ENCODE measurements at regions of chr4 and their contacts with region 1.

Region 1: GRCh38 chr4:17810260-17811077 is at the starts of genes DCAF16 and NCAPG:
- DNase-seq: peak; percentile 98 to 99 (median 99)
- H3K4me3 ChIP-seq: peak within 1 kb of the TSS; percentile 74 to 97
- H3K4me3 Mint-ChIP-seq: peak within 1 kb of the TSS; percentile 96 to 100 (median 98)
- H3K27ac ChIP-seq: peak within 1 kb of the TSS; percentile 97
- H3K27ac Mint-ChIP-seq: peak within 1 kb of the TSS; percentile 97 to 100 (median 99)
- H3K4me1 ChIP-seq: peaks cover 66% of the 10 kb centered on the region
- H3K4me1 Mint-ChIP-seq: peaks cover 45 to 70% (median 56%) of the 10 kb centered on the region in 4 donors
- H3K27me3 ChIP-seq: no peaks in the 10 kb centered on the region
- H3K27me3 Mint-ChIP-seq: no peaks in the 10 kb centered on the region
- total RNA-seq, gene DCAF16: 74.7 to 74.9 TPM
- total RNA-seq, gene NCAPG: 0.20 to 0.83 TPM

Region 2: DNA sequence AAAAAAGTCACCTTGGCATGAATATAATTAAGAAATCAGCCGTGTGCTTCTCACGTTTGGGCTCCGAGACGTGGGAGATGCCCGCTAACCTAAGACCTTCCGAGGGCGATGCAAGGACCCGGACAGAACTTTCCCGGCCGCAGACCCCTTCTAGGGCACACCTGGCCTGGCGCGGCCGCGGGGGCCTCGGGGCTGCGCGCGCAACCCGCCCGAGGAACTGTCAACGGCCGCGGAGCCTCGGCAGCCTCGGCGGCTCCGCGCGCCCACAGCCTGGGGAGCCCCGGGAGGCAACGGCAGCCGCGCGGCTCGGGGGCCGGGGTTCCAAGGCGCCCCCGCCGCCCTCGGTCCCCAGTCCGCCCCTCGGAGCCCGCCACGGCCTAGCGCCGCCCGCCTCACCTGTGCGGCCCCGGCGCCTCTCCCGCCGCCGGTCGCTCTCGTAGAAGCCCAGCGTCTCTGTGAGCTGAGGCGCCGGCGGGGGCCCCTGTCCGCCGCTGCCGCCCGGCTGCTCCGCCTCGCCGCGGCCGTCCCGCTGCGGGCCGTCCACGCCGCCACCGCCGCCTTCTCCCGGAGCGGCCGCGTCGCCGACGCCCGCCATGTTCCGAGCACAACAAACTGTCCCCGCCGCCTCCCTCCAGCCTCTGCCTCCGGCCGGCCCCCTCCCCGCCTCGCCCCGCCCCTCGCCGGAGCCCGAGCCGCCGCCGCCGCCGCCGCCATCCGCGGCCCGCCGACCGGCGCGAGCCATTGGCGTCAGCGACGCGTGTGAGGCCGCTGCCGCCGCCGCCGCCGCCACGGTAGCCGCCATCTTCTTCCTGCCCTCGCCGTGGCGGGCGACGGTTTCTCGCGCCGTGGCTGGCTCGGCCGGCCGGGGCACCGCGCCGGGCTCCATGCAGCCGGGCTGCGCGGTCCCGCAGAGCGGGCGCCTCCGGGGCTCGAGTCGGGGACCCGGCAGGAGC is 1584.3 kb before region 1 on chr4 and contains the start of gene TAPT1:
- CTCF ChIA-PET with region 1: no interaction called
- POLR2A ChIA-PET with region 1: no interaction called
- intact Hi-C with region 1: loop called (anchors 5 kb)
- DNase-seq: peak; percentile 70 to 80 (median 72)
- H3K4me3 ChIP-seq: peak within 1 kb of the TSS; percentile 67 to 97
- H3K4me3 Mint-ChIP-seq: peak within 1 kb of the TSS; percentile 92 to 97 (median 93)
- H3K27ac ChIP-seq: peak within 1 kb of the TSS; percentile 69
- H3K27ac Mint-ChIP-seq: peak within 1 kb of the TSS; percentile 96 to 97 (median 96)
- H3K4me1 ChIP-seq: peaks cover 50% of the 10 kb centered on the region
- H3K4me1 Mint-ChIP-seq: peaks cover 36 to 72% (median 47%) of the 10 kb centered on the region in 4 donors
- H3K27me3 ChIP-seq: no peaks in the 10 kb centered on the region
- H3K27me3 Mint-ChIP-seq: no peaks in the 10 kb centered on the region
- total RNA-seq, gene TAPT1: 55.1 to 57.5 TPM

Region 3: DNA sequence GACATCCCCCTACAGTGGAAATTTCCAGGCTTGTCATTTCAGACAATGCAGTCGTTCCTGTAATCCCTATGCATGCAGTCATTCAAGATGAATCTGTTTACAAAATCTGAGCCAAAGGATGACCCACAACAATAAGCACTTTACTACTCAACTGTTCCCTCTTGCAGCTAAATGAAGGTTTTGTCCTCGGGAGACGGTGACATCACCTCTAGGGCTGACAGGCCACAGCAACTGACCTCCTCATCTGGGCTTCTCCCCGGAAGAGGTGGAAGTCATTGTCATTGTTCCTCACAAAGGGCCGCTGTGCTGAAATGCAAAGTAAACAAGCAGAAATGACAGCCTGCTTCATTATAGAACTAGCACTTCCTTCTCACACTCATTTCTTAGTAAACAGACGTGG is 266.3 kb before region 1 on chr4:
- CTCF ChIA-PET with region 1: interaction called, 57 read pairs
- POLR2A ChIA-PET with region 1: no interaction called
- intact Hi-C with region 1: loop called (anchors 1 kb)
- DNase-seq: no peak
- H3K4me3 ChIP-seq: no peak overlapping the region
- H3K4me3 Mint-ChIP-seq: no peak overlapping the region
- H3K27ac ChIP-seq: no peak overlapping the region
- H3K27ac Mint-ChIP-seq: no peak overlapping the region
- H3K4me1 ChIP-seq: no peaks in the 10 kb centered on the region
- H3K4me1 Mint-ChIP-seq: peaks cover 0 to 5% (median 1%) of the 10 kb centered on the region in 4 donors
- H3K27me3 ChIP-seq: no peaks in the 10 kb centered on the region
- H3K27me3 Mint-ChIP-seq: peaks cover 3 to 12% of the 10 kb centered on the region in 2 donors

Region 4: DNA sequence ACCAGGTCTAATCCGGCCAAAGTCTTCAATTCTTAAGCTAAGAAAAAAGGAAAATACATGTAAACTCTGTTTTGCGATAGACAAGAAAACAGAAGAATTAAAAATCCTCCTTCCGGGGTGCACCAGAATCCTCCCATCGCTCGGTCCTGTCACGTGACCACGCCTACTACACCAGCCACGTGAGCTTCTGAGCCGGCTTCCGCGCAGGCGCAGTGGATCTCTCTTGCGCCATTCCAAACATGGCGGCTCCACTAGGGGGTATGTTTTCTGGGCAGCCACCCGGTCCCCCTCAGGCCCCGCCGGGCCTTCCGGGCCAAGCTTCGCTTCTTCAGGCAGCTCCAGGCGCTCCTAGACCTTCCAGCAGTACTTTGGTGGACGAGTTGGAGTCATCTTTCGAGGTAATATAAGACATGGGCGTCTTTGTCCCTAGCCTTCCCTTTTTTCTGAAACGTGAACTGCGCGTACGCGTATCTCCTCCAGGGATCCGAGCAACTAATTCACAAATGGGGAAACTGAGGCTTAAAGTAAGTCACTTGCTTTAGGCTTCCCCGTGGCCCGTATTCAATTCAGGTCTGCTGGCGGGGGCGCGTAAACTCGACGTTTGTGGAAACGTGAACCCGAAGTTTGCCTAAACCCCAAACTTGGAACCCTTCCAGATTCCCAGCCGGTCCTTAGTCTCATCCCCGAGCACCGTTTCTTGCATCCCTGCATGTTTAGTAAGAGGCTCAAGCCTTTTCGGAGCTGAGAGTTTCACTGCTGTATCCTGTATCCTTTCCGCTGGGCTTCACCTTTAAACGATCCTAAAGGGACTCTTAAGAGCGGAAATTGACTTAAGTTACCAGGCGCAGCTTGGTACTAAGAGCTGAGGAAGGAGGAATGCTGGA is 195.8 kb before region 1 on chr4 and contains the start of gene MED28:
- CTCF ChIA-PET with region 1: interaction called, 6 read pairs
- POLR2A ChIA-PET with region 1: interaction called, 23 read pairs
- intact Hi-C with region 1: loop called (anchors 1 kb)
- DNase-seq: peak; percentile 92 to 96 (median 94)
- H3K4me3 ChIP-seq: peak within 1 kb of the TSS; percentile 82 to 100
- H3K4me3 Mint-ChIP-seq: peak within 1 kb of the TSS; percentile 95 to 100 (median 99)
- H3K27ac ChIP-seq: peak within 1 kb of the TSS; percentile 95
- H3K27ac Mint-ChIP-seq: peak within 1 kb of the TSS; percentile 95 to 100 (median 96)
- H3K4me1 ChIP-seq: peaks cover 45% of the 10 kb centered on the region
- H3K4me1 Mint-ChIP-seq: peaks cover 25 to 61% (median 44%) of the 10 kb centered on the region in 4 donors
- H3K27me3 ChIP-seq: no peaks in the 10 kb centered on the region
- H3K27me3 Mint-ChIP-seq: no peaks in the 10 kb centered on the region
- total RNA-seq, gene MED28: 85.4 to 87.0 TPM

Region 5: GRCh38 chr4:17702641-17703040 is 107.8 kb before region 1 on chr4:
- CTCF ChIA-PET with region 1: no interaction called
- POLR2A ChIA-PET with region 1: no interaction called
- intact Hi-C with region 1: no loop called
- DNase-seq: no peak
- H3K4me3 ChIP-seq: no peak overlapping the region
- H3K4me3 Mint-ChIP-seq: no peak overlapping the region
- H3K27ac ChIP-seq: no peak overlapping the region
- H3K27ac Mint-ChIP-seq: no peak overlapping the region
- H3K4me1 ChIP-seq: no peaks in the 10 kb centered on the region
- H3K4me1 Mint-ChIP-seq: no peaks in the 10 kb centered on the region
- H3K27me3 ChIP-seq: no peaks in the 10 kb centered on the region
- H3K27me3 Mint-ChIP-seq: peaks cover 2 to 4% of the 10 kb centered on the region in 2 donors

Region 6: GRCh38 chr4:17797808-17798207 is 12.7 kb before region 1 on chr4:
- CTCF ChIA-PET with region 1: interaction called, 25 read pairs
- POLR2A ChIA-PET with region 1: interaction called, 3 read pairs
- intact Hi-C with region 1: no loop called
- DNase-seq: no peak
- H3K4me3 ChIP-seq: no peak overlapping the region
- H3K4me3 Mint-ChIP-seq: no peak overlapping the region
- H3K27ac ChIP-seq: no peak overlapping the region
- H3K27ac Mint-ChIP-seq: peak overlapping the region in 1 of 7 donors; percentile 38
- H3K4me1 ChIP-seq: no peaks in the 10 kb centered on the region
- H3K4me1 Mint-ChIP-seq: peaks cover 6 to 9% (median 7%) of the 10 kb centered on the region in 4 donors
- H3K27me3 ChIP-seq: no peaks in the 10 kb centered on the region
- H3K27me3 Mint-ChIP-seq: no peaks in the 10 kb centered on the region

Measured in CD4-positive, alpha-beta memory T cell (primary cell).